Posterior vena cava (tissue), 2 donors: ENCODE measurements at regions of chr1 and their contacts with region 1.

Region 1: DNA sequence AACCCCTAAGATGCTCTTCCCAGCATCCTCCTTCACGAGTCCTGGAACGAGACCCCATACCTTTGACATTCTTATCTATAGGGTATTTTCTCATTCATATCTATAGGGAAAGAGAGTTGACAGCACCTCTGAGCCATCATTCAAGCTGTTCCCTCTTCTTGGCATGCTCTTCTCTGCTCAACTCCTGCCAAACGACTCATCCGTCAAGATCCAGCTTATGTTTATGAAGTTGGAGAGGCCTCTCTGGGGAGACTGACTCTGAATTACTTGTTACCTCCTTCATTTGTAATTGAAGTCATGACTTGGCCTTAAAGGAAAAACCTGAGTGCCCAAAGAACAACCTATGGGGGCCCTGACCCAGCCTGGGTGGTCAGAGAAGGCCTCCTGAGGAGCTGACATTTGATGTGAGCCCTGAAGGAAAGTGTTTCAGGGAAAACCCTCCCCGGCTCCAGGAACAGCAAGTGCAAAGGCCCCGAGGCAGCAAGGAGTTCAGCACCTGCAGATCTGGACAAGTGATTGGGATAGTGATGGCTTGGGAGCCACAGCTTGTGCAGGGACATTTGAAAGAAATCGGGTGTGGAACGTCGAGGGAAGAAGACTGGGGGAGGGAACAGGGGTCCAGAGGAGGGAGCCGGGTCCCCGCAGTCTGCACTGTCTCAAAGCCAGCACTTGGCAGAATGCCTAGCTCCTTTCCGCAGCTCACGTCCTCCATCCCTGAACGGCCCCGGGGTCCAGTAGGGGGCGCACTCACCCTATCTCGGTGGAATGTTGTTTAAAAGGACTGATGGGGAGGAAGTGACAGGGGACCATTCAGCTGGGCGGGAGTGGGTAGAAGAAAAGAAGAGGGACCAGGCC is 14.0 kb upstream of the CDA start:
- DNase-seq: peak; percentile 95

Region 2: DNA sequence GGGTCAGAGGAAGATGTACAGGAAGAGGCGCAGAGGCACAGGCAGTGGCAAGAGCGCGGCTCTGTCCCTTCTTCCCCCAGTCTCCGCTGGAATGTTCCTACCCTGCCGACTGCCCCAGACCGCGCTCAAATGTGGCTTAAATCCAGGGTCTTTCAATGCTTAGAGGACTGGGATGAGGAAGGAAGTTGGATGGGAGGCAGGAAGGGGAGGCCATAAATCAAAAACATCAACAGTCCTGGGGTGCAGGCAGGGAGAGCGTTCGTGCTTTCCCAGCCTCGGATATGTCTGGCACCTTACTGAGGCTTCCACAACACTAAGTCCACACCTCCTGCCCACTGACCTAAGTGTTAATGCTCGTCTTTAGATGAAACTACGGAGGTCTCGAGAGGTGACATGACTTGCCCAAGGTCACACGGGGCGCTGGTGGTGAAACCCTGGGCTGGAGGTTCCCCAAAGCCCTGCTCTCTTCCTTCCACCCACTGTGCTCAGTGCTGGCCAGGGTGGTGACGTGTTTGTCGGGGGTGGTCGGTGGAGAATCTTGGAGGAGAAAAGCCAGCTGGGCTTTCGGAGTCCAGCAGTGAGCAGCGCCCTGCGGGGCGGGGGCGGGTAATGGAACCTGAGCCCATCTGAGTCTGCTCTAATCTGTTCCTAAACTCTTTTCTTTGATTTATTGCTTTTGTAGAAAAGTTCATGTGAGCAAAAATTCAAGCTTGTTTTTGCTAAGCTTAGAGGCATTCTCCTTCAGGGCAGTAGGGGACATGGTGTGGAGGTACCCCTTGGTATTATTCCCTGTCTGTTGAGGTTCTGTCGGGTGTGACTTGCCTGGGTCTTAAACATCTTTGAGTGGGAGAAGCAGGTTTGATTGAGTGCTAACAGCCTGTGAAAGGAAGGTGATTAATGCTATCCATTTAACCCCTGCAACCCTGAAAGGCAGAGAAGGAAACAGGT is 14.7 kb after region 1 on chr1:
- intact Hi-C with region 1: no loop called
- DNase-seq: peak; percentile 94

Region 3: DNA sequence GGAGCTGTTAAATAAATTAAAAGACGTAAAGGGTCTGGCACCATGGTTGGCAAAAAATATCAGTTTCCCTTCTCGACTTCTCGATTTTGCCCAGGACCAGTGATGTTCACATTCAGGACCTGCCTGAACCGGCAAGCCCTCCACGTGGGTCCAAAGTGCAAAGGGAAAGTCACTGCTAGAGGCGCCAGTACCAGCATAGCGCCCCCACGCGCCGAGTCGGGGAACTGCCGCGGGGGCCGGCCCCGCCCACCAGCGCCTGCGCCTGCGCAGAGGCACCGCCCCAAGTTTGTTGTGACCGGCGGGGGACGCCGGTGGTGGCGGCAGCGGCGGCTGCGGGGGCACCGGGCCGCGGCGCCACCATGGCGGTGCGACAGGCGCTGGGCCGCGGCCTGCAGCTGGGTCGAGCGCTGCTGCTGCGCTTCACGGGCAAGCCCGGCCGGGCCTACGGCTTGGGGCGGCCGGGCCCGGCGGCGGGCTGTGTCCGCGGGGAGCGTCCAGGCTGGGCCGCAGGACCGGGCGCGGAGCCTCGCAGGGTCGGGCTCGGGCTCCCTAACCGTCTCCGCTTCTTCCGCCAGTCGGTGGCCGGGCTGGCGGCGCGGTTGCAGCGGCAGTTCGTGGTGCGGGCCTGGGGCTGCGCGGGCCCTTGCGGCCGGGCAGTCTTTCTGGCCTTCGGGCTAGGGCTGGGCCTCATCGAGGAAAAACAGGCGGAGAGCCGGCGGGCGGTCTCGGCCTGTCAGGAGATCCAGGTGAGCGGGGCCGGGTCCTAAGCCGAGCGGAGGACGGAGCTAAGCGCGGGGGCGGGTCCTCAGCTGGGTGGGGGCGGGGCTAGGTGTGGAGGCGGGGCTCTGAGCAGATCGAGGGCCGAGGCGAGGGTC is 58.5 kb after region 1 on chr1 and contains the start of gene PINK1:
- intact Hi-C with region 1: loop called in 1 of 2 experiments (anchors 10 kb)
- DNase-seq: peak; percentile 95
- total RNA-seq, gene PINK1: 64.8 to 95.9 TPM

Region 4: GRCh38 chr1:20640183-20640597 is 65.3 kb after region 1 on chr1:
- intact Hi-C with region 1: loop called (anchors 5 to 10 kb)
- DNase-seq: no peak